Heart left ventricle (tissue), 16 donors: ENCODE measurements at regions of chr1 and their contacts with region 1.

Region 1: DNA sequence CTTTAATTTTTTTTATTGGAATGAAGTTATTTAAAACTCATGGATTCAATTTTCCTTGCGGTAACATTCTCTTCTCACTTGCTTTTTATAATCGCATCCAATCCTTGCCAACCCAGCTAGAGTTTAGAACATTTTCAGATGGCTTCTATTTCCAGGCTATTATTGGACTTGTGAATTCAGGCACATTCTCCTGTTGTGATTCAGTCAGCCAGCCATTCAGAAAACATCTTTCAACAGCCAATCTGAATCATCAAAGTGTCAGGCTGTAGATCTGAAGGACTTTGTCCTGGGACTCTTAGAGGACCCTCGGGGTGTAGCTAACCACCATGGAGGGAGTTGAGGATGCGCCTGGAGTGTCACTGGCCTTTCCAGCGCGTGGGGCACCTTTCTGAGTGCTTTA is 92.4 kb downstream of the PRDM2 start:
- DNase-seq: no peak
- ATAC-seq: peak; percentile 34 to 68 (median 58)
- H3K4me3 ChIP-seq: no peak overlapping the region
- H3K27ac ChIP-seq: peak overlapping the region in 11 of 12 donors; percentile 10 to 77 (median 50)
- H3K4me1 ChIP-seq: peaks cover 0 to 29% (median 6%) of the 10 kb centered on the region in 12 donors
- H3K27me3 ChIP-seq: no peaks in the 10 kb centered on the region
- CTCF ChIP-seq: no peak
- POLR2A ChIP-seq: no peak

Region 2: GRCh38 chr1:13775916-13776315 is 16.5 kb before region 1 on chr1:
- intact Hi-C with region 1: loop called in 1 of 10 experiments (anchors 2 kb)
- DNase-seq: no peak
- ATAC-seq: no peak
- H3K4me3 ChIP-seq: no peak overlapping the region
- H3K27ac ChIP-seq: no peak overlapping the region
- H3K4me1 ChIP-seq: peaks cover 0 to 13% (median 2%) of the 10 kb centered on the region in 12 donors
- H3K27me3 ChIP-seq: no peaks in the 10 kb centered on the region
- CTCF ChIP-seq: no peak
- POLR2A ChIP-seq: no peak